IMR-90 (cell line): ENCODE measurements at regions of chr11 and their contacts with region 1.

Region 1: DNA sequence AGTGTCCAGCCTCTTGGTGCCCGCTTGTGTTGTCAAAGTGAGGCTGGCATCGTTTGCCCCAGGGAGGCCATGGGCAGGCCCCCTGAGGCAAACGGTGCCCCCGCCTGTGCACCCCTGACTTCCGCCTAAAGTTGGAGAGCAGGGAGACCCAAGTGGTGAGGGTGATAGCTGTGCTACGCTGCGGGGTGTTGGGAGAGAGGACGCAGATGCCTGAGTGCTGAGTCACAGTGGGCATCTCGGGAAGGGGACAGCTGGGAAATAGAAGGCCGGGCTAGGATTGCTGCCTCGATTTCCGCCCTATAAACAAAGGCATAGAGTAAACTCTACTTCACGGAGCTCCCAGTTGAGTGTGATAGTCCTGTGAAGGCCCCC is 5.8 kb downstream of the GRIK4 start:
- DNase-seq: peak; percentile 52
- ATAC-seq: peak; percentile 71
- H3K4me3 ChIP-seq: no peak overlapping the region
- H3K27ac ChIP-seq: peak overlapping the region; percentile 87
- H3K4me1 ChIP-seq: peaks cover 13% of the 10 kb centered on the region; the same call in 1 of the 2 replicates
- H3K27me3 ChIP-seq: no peaks in the 10 kb centered on the region
- CTCF ChIP-seq: no peak
- POLR2A ChIP-seq: no peak
- RAD21 ChIP-seq: no peak

Region 2: DNA sequence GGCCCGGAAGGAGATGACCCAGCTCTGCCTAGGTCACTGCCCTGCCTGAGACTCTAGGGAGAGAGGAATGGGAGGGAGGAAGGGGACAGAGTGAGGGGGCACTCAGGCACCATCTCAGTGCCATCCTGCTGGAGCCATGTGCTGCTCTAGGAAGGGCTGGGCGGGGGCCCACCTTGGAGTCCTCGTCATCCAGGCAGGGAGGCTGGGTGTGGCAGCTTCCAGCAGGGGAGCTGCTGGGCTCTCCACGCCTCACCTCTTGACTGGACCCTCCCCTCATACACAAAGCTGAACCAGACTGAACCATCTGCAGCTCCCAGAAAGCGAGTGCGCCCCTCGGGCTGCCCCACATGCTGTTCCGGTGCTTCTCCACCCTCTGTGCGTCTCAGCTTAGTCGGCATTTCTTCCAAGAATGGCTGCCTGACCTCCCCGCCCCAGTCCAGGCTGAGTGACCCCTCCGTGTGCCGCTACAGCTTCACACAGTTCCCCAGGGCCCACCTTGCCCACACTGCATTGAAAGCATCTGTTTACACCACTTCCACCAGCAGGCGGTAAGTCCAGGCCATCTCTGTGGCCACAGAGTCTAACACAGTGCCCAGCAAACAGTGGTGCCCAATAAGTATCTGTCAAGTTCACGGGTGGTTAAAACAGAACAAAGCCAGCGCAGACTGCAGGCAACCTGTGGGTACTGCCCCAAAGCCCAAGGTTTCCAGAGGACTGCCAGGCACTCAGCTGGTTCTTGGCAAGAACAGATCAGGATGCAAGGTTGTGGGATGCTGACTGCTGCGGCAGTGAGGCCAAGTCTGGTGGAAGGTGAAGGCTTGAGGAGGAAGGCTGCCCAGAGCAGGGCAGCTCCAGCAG is 370.1 kb before region 1 on chr11:
- CTCF ChIA-PET with region 1: no interaction called
- POLR2A ChIA-PET with region 1: no interaction called
- dilution Hi-C with region 1: no loop called
- in situ Hi-C with region 1: no loop called
- intact Hi-C with region 1: no loop called
- DNase-seq: no peak
- ATAC-seq: no peak
- H3K4me3 ChIP-seq: no peak overlapping the region
- H3K27ac ChIP-seq: no peak overlapping the region
- H3K4me1 ChIP-seq: no peaks in the 10 kb centered on the region
- H3K27me3 ChIP-seq: peaks cover 39% of the 10 kb centered on the region
- CTCF ChIP-seq: no peak
- POLR2A ChIP-seq: no peak
- RAD21 ChIP-seq: no peak

Region 3: DNA sequence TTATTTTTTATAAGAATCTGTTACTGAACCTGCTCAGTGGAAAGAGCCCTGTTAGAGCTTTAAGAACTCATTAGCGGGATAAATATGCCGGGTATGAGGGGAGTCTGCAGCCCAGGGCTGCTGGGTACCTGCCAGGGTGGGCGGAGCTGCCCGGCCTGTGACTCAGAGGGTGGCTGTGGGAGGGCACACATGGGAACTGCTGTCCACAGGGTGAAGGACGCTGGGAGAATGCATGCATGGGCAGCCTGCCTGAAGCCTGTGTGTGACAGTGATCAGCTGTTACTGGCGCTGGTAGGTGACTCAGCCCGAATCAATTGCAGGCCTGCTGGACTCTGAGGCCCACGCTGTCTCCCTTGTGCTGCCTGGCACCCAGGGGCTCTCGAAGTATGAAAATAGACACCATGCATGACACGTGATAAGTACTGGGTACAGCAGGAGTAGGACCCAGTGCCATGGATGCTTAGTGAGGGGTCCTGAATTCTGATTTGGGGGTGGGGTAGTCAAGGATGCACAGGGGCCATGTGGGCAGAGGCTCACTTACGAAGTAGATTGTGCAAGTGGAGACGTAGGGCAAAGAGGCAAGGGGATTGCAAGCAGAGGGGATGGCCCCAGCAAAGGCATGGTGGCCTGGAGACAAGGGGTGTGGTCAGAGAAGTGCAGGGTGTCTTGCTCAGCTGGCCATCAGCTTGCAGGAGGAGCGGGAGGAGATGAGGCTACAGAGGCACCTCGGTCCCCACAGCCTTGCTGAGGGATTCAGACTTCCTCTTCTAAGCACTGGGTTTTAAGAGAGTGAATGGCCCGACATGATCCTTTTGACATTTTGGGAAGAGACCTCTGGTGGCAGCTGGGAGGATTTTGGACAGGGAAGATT is 30.7 kb after region 1 on chr11:
- CTCF ChIA-PET with region 1: interaction called, 7 read pairs
- POLR2A ChIA-PET with region 1: no interaction called
- dilution Hi-C with region 1: no loop called
- in situ Hi-C with region 1: no loop called
- intact Hi-C with region 1: loop called (anchors 2 kb)
- DNase-seq: peak; percentile 98
- ATAC-seq: peak; percentile 74
- H3K4me3 ChIP-seq: no peak overlapping the region
- H3K27ac ChIP-seq: peak overlapping the region; percentile 66
- H3K4me1 ChIP-seq: peaks cover 23% of the 10 kb centered on the region
- H3K27me3 ChIP-seq: no peaks in the 10 kb centered on the region
- CTCF ChIP-seq: no peak
- POLR2A ChIP-seq: no peak
- RAD21 ChIP-seq: peak; percentile 17